ENCODE measurements at regions of chr4 and their contacts with region 1.

Region 1: DNA sequence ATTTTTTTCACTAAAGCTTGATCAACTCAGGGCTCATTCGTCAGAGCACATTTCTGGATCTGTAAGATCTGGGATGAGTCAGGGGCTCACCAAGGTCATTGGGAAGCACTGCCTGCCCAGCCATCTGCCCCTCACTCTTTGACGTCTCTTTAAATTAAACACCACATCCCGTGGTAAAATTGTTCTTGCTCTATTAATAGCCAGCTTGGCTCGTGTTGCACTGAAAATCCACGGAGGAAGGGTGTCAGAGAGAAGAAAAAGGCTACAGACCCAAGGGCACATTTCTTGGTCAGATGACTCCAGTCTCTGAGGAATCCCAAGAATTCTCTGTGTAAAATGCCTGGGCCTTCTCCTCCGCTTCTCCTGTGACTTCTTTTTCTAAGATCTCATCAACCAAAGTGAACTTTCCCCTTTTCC is 45.7 kb upstream of the GATB start:
- DNase-seq: peak; percentile 30
- ATAC-seq: peak; percentile 77 to 79

Region 2: DNA sequence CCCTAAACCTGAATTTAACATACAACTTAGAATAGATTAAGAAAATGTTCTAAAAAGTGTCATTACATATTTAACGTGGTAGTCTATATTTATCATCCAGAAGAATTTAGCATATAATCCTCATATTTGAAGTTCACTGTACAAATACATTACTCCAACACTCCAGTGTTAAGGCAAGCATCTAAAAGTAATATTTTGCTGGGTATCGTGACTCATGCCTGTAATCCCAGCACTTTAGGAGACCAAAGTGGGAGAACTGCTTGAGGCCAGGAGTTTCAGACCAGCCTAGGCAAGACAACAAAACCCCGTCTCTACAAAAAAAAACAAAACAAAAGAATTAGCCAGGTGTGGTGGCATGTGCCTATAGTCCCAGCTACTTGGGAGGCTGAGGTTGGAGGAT is 816.3 kb before region 1 on chr4:
- intact Hi-C with region 1: no loop called
- DNase-seq: no peak
- ATAC-seq: no peak

Region 3: DNA sequence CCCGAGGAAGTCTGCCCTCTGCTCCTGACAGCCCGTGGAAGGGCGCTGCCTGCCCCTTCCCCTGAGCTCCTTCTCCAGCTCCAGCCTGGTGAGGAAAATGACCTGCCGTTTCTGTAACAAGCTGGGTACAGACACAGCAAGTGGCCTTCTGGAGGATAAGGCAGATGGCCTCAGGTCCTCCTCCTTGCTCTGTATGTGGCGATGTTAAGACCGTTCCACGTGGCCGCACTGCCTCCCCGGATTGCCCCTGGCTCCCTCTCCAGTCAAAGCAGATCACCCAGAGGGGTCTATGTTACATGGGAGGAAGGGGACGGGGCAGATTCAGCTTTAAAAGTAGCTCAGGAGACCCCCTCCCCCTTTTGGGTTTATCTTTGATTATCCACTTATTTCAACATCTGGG is 34.6 kb after region 1 on chr4:
- intact Hi-C with region 1: no loop called
- DNase-seq: no peak
- ATAC-seq: no peak

Region 4: GRCh38 chr4:151957153-151957552 is 150.6 kb after region 1 on chr4:
- intact Hi-C with region 1: loop called in 1 of 2 experiments (anchors 5 kb)
- DNase-seq: no peak
- ATAC-seq: peak; percentile 40 to 49

Region 5: GRCh38 chr4:152039023-152039481 is 232.5 kb after region 1 on chr4:
- intact Hi-C with region 1: loop called in 1 of 2 experiments (anchors 2 kb)
- DNase-seq: no peak
- ATAC-seq: peak in 1 of 2 donors; percentile 50

Region 6: GRCh38 chr4:152118819-152119553 is 312.5 kb after region 1 on chr4:
- intact Hi-C with region 1: no loop called
- DNase-seq: no peak
- ATAC-seq: no peak